H1 (cell line): ENCODE measurements at regions of chr3 and their contacts with region 1.

Region 1: GRCh38 chr3:15557511-15557946 is 36.0 kb upstream of the COLQ start:
- DNase-seq: peak in 1 of 2 experiments; percentile 55
- H3K4me3 ChIP-seq: no peak overlapping the region
- H3K27ac ChIP-seq: no peak overlapping the region
- H3K4me1 ChIP-seq: no peaks in the 10 kb centered on the region
- H3K27me3 ChIP-seq: no peaks in the 10 kb centered on the region
- CTCF ChIP-seq: peak in 2 of 3 experiments; percentile 21 to 49; a peak in 2 of 4 replicates
- EP300 ChIP-seq: no peak
- POLR2A ChIP-seq: no peak
- RAD21 ChIP-seq: peak; percentile 51 to 53

Region 2: DNA sequence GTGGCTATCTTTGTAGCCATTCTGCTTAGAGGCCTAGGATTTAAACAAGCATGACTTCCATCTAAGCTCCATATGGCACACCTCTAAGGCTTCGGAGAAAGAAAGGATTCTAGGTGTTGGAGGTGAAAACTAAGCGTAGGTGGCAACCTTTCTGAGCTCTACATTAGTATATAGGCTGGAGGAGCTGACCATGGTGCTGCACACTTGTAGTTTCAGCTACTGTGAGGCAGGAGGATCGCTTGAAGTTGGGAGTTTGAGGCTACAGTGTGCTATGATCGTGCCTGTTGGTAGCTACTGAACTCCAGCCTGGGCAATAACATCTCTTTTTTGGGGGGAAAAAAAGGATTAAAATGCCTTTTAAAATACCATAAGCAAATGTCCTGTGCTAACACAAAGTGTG is 122.8 kb before region 1 on chr3:
- CTCF ChIA-PET with region 1: interaction called, 12 read pairs
- POLR2A ChIA-PET with region 1: interaction called, 3 read pairs
- DNase-seq: no peak
- H3K4me3 ChIP-seq: no peak overlapping the region
- H3K27ac ChIP-seq: no peak overlapping the region
- H3K4me1 ChIP-seq: no peaks in the 10 kb centered on the region
- H3K27me3 ChIP-seq: no peaks in the 10 kb centered on the region
- CTCF ChIP-seq: no peak
- EP300 ChIP-seq: no peak
- POLR2A ChIP-seq: no peak
- RAD21 ChIP-seq: no peak; a peak in 1 of 4 replicates

Region 3: DNA sequence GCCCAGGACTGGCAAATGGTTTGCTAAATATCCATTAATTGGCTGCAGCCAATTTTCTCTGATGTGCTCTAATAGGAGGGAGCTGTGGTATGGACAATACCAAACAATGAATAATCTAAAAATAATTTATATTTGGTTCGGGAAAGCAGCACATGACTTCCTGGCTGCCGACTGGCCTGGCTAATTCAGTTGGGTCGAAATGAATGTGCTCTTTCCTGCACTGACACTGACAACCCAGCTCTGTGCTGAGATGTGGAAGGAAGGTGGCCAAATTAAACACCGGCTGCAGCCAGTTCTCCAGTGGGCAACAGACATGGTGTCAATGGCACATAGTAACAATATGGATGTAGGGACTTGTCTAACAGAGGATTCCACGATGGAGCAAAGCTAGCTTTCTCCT is 14.9 kb before region 1 on chr3:
- CTCF ChIA-PET with region 1: interaction called, 18 read pairs
- POLR2A ChIA-PET with region 1: no interaction called
- DNase-seq: no peak
- H3K4me3 ChIP-seq: no peak overlapping the region
- H3K27ac ChIP-seq: no peak overlapping the region
- H3K4me1 ChIP-seq: no peaks in the 10 kb centered on the region
- H3K27me3 ChIP-seq: no peaks in the 10 kb centered on the region
- CTCF ChIP-seq: no peak
- EP300 ChIP-seq: no peak
- POLR2A ChIP-seq: no peak
- RAD21 ChIP-seq: no peak

Region 4: GRCh38 chr3:15572138-15572537 is 14.6 kb after region 1 on chr3:
- CTCF ChIA-PET with region 1: interaction called, 17 read pairs
- POLR2A ChIA-PET with region 1: interaction called, 6 read pairs
- DNase-seq: no peak
- H3K4me3 ChIP-seq: no peak overlapping the region
- H3K27ac ChIP-seq: no peak overlapping the region
- H3K4me1 ChIP-seq: no peaks in the 10 kb centered on the region
- H3K27me3 ChIP-seq: no peaks in the 10 kb centered on the region
- CTCF ChIP-seq: no peak
- EP300 ChIP-seq: no peak
- POLR2A ChIP-seq: no peak
- RAD21 ChIP-seq: no peak

Region 5: DNA sequence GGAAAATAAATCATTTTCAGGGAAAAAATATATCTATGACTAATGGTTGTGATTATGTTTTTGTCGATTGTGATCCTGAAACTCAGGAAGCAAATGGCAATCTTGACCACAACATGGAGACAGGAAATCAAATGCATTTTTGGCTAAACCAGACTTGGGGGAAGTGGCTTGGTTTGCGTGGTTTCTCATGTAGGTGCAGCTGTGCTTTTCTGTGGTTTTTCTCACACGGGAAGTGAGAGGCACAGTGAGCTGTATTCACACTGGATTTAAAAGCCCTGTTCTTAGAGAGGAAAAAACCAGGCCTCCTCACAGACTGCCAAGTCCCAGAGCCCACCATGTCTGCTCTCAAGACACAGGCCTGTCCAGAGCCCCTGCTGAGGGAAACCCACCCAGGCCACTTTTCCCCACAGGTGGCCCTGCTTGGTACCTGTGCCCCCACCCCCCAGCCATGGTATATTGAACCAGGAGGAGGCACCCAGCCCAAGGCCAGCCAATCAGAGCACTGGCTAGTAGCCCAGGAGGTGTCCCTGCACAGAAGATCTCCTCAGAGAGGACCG is 90.2 kb after region 1 on chr3:
- CTCF ChIA-PET with region 1: no interaction called
- POLR2A ChIA-PET with region 1: no interaction called
- DNase-seq: no peak
- H3K4me3 ChIP-seq: no peak overlapping the region
- H3K27ac ChIP-seq: no peak overlapping the region
- H3K4me1 ChIP-seq: peaks cover 0 to 4% (median 2%) of the 10 kb centered on the region in 4 experiments; a peak in 2 of 7 replicates
- H3K27me3 ChIP-seq: no peaks in the 10 kb centered on the region; a peak in 1 of 7 replicates
- CTCF ChIP-seq: no peak
- EP300 ChIP-seq: no peak
- POLR2A ChIP-seq: no peak
- RAD21 ChIP-seq: no peak

Region 6: GRCh38 chr3:15783361-15783969 is 225.9 kb after region 1 on chr3:
- CTCF ChIA-PET with region 1: no interaction called
- POLR2A ChIA-PET with region 1: no interaction called
- DNase-seq: no peak
- H3K4me3 ChIP-seq: no peak overlapping the region
- H3K27ac ChIP-seq: no peak overlapping the region
- H3K4me1 ChIP-seq: peaks cover 0 to under 1% (median 0%) of the 10 kb centered on the region in 4 experiments; a peak in 1 of 7 replicates
- H3K27me3 ChIP-seq: no peaks in the 10 kb centered on the region
- CTCF ChIP-seq: no peak
- EP300 ChIP-seq: no peak
- POLR2A ChIP-seq: no peak
- RAD21 ChIP-seq: no peak